ENCODE measurements at regions of chr3 and their contacts with region 1.

Region 1: GRCh38 chr3:123328851-123329635 is 119.8 kb downstream of the ADCY5 start:
- DNase-seq: peak; percentile 70 to 95
- H3K4me3 ChIP-seq: no peak overlapping the region
- CTCF ChIP-seq: peak in 1 of 3 donors; percentile 53
- POLR2A ChIP-seq: no peak

Region 2: DNA sequence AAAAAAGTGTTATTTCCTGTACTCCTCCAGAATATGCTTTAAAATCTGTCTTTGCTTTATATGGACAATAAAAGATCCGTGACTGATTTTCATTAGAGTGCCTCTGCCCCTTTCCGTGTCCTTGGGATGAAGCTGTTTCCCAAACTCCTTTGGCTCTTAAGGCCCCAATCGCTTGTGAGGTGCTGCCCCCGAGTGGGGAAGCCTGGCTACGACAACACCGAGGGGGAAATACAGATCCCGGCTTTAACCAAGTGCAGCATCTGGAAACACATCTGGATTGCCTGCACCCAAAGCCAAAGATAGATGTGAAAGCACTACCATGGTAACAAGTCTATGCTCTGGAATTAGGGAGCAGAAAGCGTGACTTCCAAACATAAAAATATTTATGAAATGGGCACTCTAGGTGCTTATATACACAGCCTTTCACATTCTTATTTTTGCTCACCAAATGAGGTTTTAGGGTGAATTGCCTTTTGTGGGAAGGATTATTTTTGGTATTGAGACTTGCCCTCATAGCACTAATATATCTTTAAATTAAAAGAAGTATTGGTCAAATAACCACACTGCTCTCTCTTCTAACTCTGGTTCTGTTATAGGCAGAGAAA is 160.5 kb after region 1 on chr3:
- intact Hi-C with region 1: loop called (anchors 5 kb)
- DNase-seq: peak; percentile 73 to 95
- H3K4me3 ChIP-seq: no peak overlapping the region
- CTCF ChIP-seq: peak in 1 of 3 donors; percentile 64
- POLR2A ChIP-seq: no peak

Region 3: DNA sequence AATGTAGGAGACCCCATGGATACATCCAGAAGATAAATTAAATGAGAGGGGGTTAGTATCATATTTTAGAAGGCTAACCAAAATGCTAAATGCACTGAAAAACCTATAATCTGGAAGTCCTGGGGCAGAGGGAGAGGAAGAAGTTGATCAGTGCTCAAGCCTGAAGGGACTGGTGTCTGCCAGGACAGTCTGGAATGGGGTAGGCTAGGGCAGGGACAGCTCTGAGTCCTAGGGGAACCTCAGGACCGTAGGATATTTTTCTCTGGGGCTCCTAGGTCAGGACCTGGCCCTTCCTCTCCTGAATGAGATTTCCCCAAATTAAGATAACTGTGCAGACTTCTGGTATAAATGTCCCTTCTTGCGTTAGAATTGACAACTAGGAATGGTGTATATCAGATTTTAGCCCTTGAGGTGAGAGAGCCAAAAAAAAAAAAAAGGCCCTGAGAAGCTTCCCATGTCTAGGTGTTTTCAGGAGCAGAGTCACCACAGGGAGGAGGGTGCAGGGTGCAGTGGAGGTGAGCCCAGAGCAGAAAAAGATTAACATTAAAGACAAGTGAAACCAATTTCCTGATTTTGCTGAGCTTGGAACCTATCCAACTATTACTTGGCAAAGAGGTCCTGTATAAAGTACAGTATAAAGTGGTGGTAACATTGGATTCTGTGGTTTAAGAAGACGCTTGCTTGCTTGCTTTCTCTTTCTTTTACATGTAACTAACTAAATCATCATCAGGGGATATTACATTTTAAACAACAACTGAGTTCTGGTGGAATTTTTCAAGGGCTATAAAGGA is 192.3 kb after region 1 on chr3:
- intact Hi-C with region 1: no loop called
- DNase-seq: no peak
- H3K4me3 ChIP-seq: no peak overlapping the region
- CTCF ChIP-seq: no peak
- POLR2A ChIP-seq: no peak

Region 4: DNA sequence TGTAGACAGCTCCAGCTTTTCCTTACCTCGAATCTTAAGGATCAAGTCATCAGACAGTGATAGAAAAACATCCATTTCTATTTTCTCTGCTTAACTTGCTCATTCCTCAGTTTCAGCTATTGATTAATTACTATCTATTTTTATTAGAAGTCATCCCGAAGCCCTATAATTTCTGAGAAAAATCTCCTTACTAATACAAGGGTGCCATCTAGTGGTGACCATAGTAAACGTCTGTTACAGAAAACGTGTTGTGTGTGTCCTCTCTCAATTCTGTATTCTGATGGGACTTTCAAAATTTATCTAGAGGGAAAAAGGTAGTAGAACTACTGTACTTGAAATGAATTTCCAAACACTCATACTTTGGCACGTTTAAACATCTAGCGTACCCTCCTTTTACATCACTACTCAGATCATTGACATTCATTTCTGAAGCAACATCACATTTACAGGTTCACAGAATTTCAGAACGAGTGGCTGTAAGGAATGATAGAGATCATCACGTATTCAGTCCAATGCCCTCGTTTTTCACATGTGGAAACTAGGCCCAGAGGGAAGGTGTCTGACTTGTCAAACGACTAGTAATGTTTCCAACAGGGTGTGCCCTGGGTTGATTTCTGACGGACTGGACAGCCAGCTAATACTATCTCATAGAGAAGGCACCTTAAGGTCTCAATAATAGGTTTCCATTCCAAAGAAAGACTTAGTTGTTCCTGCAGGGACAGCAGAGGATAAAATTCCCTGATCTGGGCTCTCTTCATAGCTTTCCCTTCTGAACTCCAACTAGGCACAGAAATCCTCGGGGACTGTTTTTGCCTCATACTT is 230.2 kb after region 1 on chr3:
- intact Hi-C with region 1: loop called (anchors 5 kb)
- DNase-seq: peak in 1 of 2 donors; percentile 26
- H3K4me3 ChIP-seq: no peak overlapping the region
- CTCF ChIP-seq: no peak
- POLR2A ChIP-seq: no peak